Activated CD4-positive, alpha-beta T cell treated with anti-CD3 and anti-CD28 coated beads, Interleukin-2, amount 10 ng/mL, durations not matched to agents 24 days and 14 days (primary cell): ENCODE measurements at regions of chr1 and their contacts with region 1.

Region 1: GRCh38 chr1:92960395-92961130 is 699 bp downstream of the DIPK1A start:
- DNase-seq: peak; percentile 90
- H3K4me3 Mint-ChIP-seq: peak overlapping the region; percentile 94
- H3K27ac Mint-ChIP-seq: peak overlapping the region; percentile 99
- H3K4me1 Mint-ChIP-seq: peaks cover 36% of the 10 kb centered on the region
- H3K27me3 Mint-ChIP-seq: no peaks in the 10 kb centered on the region

Region 2: DNA sequence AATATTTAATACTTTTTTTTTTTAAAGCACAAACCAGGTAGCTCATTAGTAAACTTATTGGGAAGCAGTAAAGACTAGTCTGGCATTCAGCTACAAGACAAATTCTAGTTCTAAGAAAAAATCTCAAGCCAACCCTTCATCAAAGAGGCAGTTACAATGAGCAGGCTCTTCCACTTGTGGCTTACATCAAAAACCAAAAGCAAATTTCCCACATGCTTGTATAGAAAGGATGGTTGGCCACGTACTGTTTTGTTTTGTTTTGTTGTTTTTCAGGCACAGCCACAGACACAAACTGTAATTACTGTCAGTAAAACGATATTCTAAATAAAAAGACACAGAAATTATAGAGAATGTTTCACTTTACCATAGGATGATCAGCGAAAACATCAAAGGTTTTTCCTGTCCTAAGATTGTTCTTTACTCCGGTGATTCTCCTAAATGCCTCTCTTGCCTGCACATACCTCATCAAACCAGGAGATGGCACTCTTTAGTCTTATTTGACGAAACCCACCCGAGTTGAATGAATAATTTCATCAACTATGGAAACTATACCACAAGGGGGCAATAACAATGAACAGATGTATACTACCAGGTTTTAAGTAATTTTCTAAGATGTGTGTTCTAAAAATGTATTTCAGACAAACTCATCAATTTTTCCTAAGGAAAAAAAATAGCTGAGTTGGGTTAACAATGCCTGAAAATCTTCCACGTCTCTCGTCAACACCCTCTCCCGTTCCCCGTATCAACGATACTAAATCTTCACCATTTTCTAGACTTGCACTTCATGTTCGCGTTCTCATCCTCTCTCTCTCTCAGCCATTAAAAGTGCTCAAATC is 101.8 kb before region 1 on chr1:
- intact Hi-C with region 1: loop called (anchors 1 kb)
- DNase-seq: peak; percentile 91
- H3K4me3 Mint-ChIP-seq: peak overlapping the region; percentile 64
- H3K27ac Mint-ChIP-seq: peak overlapping the region; percentile 42
- H3K4me1 Mint-ChIP-seq: peaks cover 20% of the 10 kb centered on the region
- H3K27me3 Mint-ChIP-seq: no peaks in the 10 kb centered on the region

Region 3: DNA sequence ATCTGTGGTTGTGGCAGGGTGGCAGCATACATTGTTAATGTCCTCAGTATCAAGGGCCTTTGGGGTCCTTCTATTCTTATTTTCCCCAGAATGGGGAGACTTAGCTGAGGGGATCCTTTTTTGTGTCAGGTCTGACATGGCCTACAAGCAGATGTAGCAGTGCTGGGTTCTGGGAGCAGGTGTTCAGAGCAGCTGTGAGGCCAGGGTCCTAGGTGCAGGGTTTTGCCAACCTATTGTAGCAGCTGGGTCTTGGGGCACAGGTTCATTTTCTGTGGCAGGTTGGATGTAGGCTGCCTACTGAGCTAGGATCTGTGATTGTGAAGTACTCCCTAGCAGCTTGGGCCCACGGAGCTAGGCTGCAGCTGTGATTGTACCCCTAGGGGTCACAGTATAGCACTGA is 59.4 kb before region 1 on chr1:
- intact Hi-C with region 1: no loop called
- DNase-seq: no peak
- H3K4me3 Mint-ChIP-seq: no peak overlapping the region
- H3K27ac Mint-ChIP-seq: no peak overlapping the region
- H3K4me1 Mint-ChIP-seq: peaks cover 24% of the 10 kb centered on the region
- H3K27me3 Mint-ChIP-seq: no peaks in the 10 kb centered on the region

Region 4: DNA sequence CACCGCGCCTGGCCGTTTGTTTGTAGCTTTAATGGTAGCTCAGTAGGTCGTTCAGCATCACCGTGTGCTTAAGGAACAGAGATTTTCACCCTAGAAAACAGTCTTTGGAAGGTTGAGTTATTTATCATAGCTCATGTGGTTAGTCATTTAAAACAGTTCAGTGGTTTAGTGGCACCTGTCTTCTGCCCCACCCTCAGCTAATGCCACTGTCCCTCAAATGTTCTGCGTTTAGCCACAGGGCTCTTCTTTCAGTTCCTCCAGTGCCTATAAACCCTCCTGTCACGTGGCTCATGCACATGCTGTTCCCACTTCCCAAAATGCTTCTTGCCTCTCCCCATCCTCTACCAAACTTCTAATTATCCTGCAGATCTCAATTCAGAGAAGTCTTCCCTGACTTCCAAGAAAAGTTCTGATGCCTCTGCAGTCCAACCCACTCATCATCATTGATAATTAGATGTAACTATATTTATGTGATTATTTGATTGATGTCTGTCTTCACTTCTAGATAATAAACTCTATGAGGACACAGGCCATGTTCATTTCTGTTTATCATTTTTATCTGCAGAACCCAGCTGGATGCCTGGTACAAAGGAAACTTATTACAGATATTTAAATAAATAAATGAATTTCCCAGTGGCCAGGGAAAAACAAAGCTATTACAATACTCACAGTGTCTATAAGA is 15.1 kb after region 1 on chr1:
- intact Hi-C with region 1: loop called (anchors 1 kb)
- DNase-seq: peak; percentile 59
- H3K4me3 Mint-ChIP-seq: peak overlapping the region; percentile 6
- H3K27ac Mint-ChIP-seq: peak overlapping the region; percentile 79
- H3K4me1 Mint-ChIP-seq: peaks cover 60% of the 10 kb centered on the region
- H3K27me3 Mint-ChIP-seq: no peaks in the 10 kb centered on the region

Region 5: DNA sequence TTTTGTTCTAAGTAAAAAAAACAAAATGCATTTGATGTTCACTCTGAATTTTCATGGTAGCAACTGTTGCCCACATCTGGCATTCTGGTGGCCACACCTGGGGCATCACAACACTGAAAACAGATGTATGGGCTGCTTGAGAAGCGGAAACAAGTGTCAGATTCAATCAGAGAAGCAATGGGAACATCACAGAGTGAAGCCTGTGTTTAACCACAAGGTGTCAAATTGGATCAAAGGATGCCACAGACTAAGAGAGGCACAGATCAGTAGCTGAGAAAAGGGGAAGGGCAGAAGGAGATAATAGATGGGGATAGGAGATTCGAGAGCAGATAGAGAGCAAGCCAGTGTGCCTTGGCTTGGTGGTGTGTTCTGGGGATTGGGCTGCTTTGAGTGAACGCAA is 68.8 kb after region 1 on chr1:
- intact Hi-C with region 1: no loop called
- DNase-seq: peak; percentile 79
- H3K4me3 Mint-ChIP-seq: peak overlapping the region; percentile 34
- H3K27ac Mint-ChIP-seq: peak overlapping the region; percentile 3
- H3K4me1 Mint-ChIP-seq: peaks cover 23% of the 10 kb centered on the region
- H3K27me3 Mint-ChIP-seq: peaks cover 15% of the 10 kb centered on the region

Region 6: DNA sequence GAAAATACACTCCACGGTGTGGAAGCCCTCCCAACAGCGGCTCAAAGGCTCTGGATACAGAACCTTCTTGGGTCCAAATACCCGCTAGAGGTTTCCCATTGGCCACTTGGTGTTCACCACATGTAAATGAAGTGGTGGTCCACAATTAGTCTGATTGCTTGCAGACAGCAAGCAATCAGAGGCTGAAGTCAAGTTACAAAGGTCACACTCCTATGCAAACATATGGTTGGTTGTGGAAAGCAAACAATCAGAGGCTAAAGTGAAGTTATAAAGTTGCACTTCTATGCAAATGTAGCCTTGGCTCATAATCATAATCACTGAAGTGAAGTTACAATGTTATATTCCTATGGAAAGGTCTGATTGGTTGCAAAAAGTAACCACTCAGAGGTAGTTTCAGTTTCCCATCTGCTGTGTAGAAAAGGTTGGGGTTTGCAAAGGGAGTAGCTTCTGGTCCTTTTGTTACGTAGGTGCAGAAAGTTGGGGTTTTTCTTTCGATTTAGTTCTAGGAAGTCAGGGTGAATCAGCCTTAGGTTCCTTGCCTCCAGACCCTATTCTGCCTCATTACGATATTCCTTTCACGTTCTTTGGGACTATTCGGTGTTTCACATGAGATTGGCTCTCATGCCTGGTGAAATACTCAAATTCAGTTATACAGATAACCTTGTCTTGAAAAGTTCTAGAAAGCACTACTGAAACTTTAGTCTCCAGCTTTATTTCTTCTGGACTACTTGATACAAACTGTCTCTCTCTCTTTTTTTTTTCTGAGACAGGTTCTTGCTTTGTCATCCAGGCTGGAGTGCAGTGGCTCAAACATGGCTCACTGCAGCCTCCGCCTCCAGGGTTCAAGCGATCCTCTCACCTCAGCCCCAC is 81.9 kb after region 1 on chr1:
- intact Hi-C with region 1: loop called (anchors 2 kb)
- DNase-seq: peak; percentile 88
- H3K4me3 Mint-ChIP-seq: peak overlapping the region; percentile 83
- H3K27ac Mint-ChIP-seq: peak overlapping the region; percentile 88
- H3K4me1 Mint-ChIP-seq: peaks cover 27% of the 10 kb centered on the region
- H3K27me3 Mint-ChIP-seq: no peaks in the 10 kb centered on the region

Region 7: DNA sequence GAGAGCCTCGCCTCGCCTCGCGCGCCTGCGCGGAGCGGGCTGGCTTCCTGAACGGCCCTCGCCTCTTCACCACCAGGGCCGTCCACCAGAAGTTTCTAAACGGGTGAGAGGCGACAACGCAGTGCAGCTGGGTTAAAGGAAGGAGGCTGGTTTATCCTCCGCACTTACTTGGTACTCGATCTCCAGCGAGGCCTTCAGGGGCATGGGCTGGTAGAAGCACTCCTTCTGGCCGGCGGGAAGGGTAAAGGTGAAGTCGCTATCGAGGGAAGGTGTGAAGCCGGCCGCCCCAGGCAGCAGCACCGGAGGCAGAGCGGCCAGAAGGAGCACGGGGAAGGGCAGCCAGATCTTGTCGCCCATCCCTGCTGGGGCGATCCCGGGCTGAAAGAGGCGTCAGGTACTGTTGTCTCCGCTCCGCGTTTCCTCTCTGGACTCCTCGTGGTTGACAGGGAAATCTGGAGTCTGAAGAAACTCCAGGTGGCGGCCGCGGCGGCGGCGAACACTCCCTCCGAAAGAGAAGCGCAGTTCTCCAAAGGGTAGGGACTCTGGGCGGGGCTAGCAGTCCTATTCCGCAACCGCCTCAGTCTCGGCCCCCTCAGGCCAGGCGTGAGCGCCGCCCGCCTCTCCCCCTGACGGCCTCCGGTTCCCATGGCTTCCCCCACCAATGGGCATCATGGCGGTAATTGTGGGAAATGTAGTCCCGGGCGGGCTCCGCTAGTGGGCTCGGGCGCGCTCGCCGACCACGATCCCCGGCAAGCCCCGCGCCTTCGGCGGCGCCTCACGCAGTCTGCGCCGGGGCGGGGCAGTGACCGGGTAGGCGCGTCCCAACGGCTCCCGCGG is 219.5 kb after region 1 on chr1 and contains the start of gene TMED5:
- intact Hi-C with region 1: loop called (anchors 1 kb)
- DNase-seq: peak; percentile 99
- H3K4me3 Mint-ChIP-seq: peak within 1 kb of the TSS; percentile 95
- H3K27ac Mint-ChIP-seq: peak within 1 kb of the TSS; percentile 100
- H3K4me1 Mint-ChIP-seq: peaks cover 42% of the 10 kb centered on the region
- H3K27me3 Mint-ChIP-seq: no peaks in the 10 kb centered on the region
- total RNA-seq, gene TMED5: 43.1 and 44.7 TPM in 2 replicates

Region 8: DNA sequence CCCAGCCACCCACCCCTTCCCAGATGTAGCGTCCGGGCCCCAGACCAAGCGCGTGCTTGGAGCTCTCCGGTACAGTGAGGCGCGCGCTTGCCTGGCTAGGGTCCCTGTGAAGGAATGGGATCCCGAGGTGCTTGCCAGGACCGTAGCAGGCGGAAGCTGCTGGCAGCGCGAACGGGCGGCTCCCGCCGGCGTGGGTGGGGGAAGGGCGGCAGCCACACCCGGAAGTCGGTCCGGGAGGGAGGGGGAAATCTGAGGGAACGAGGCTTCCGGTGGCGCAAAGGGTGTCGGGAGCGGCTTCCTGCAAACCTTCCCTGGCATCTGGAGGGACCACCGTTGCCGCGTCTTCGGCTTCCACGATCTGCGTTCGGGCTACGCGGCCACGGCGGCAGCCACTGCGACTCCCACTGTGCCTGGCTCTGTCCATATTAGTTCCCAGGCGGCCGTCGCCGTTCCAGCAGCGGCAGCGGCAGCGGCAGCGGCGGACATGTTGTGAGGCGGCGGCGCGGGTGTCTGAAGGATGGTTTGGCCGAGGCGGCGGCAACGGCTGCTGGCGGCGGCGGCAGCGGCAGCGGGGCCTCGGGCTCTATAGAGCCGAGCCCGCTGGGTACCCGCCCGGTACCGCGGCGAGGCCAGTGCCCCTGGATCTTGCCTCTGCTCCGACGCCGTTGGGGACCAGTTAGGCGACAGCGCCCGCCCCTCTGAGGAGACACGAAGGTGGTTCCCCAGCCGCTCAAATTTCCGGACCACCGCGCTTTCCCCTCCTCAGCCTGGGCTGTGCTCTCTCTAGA is 385.3 kb after region 1 on chr1 and contains the start of gene DR1:
- intact Hi-C with region 1: loop called (anchors 5 kb)
- DNase-seq: peak; percentile 98
- H3K4me3 Mint-ChIP-seq: peak within 1 kb of the TSS; percentile 99
- H3K27ac Mint-ChIP-seq: peak within 1 kb of the TSS; percentile 99
- H3K4me1 Mint-ChIP-seq: peaks cover 21% of the 10 kb centered on the region
- H3K27me3 Mint-ChIP-seq: no peaks in the 10 kb centered on the region
- total RNA-seq, gene DR1: 100 and 107 TPM in 2 replicates